ENCODE measurements at regions of chr15 and their contacts with region 1.

Region 1: GRCh38 chr15:41904541-41905005 is 10.7 kb upstream of the SPTBN5 start:
- DNase-seq: peak; percentile 50 to 87
- H3K4me3 ChIP-seq: no peak overlapping the region
- H3K27ac ChIP-seq: no peak overlapping the region
- H3K4me1 ChIP-seq: peaks cover 0 to 4% (median 2%) of the 10 kb centered on the region in 4 experiments; a peak in 1 of 7 replicates
- H3K27me3 ChIP-seq: no peaks in the 10 kb centered on the region; a peak in 1 of 7 replicates
- CTCF ChIP-seq: peak; percentile 84 to 97 (median 96)
- EP300 ChIP-seq: no peak
- POLR2A ChIP-seq: no peak
- RAD21 ChIP-seq: peak; percentile 93 to 96

Region 2: GRCh38 chr15:41811432-41812195 is 93.0 kb before region 1 on chr15:
- CTCF ChIA-PET with region 1: interaction called, 29 read pairs
- POLR2A ChIA-PET with region 1: no interaction called
- DNase-seq: peak; percentile 65 to 91
- H3K4me3 ChIP-seq: no peak overlapping the region
- H3K27ac ChIP-seq: no peak overlapping the region
- H3K4me1 ChIP-seq: peaks cover 0 to 2% (median 0%) of the 10 kb centered on the region in 4 experiments; a peak in 2 of 7 replicates
- H3K27me3 ChIP-seq: no peaks in the 10 kb centered on the region
- CTCF ChIP-seq: peak; percentile 82 to 89 (median 83)
- EP300 ChIP-seq: no peak
- POLR2A ChIP-seq: no peak
- RAD21 ChIP-seq: peak; percentile 91 to 94

Region 3: GRCh38 chr15:41849861-41850260 is 54.7 kb before region 1 on chr15:
- CTCF ChIA-PET with region 1: interaction called, 12 read pairs
- POLR2A ChIA-PET with region 1: interaction called, 3 read pairs
- DNase-seq: no peak
- H3K4me3 ChIP-seq: no peak overlapping the region
- H3K27ac ChIP-seq: no peak overlapping the region
- H3K4me1 ChIP-seq: no peaks in the 10 kb centered on the region; a peak in 2 of 7 replicates
- H3K27me3 ChIP-seq: no peaks in the 10 kb centered on the region
- CTCF ChIP-seq: no peak
- EP300 ChIP-seq: no peak
- POLR2A ChIP-seq: no peak
- RAD21 ChIP-seq: no peak

Region 4: GRCh38 chr15:41866263-41866703 is 38.3 kb before region 1 on chr15:
- CTCF ChIA-PET with region 1: interaction called, 49 read pairs
- POLR2A ChIA-PET with region 1: no interaction called
- DNase-seq: no peak
- H3K4me3 ChIP-seq: no peak overlapping the region
- H3K27ac ChIP-seq: no peak overlapping the region
- H3K4me1 ChIP-seq: peaks cover 0 to 8% (median 2%) of the 10 kb centered on the region in 4 experiments; a peak in 3 of 7 replicates
- H3K27me3 ChIP-seq: no peaks in the 10 kb centered on the region; a peak in 2 of 7 replicates
- CTCF ChIP-seq: no peak
- EP300 ChIP-seq: no peak
- POLR2A ChIP-seq: no peak
- RAD21 ChIP-seq: no peak

Region 5: GRCh38 chr15:41957021-41957897 is 52.7 kb after region 1 on chr15:
- CTCF ChIA-PET with region 1: interaction called, 17 read pairs
- POLR2A ChIA-PET with region 1: no interaction called
- DNase-seq: no peak
- H3K4me3 ChIP-seq: no peak overlapping the region
- H3K27ac ChIP-seq: no peak overlapping the region
- H3K4me1 ChIP-seq: peaks cover 0 to 4% (median 2%) of the 10 kb centered on the region in 4 experiments; a peak in 5 of 7 replicates
- H3K27me3 ChIP-seq: no peaks in the 10 kb centered on the region
- CTCF ChIP-seq: no peak
- EP300 ChIP-seq: no peak
- POLR2A ChIP-seq: no peak
- RAD21 ChIP-seq: no peak

Measured in H1 (cell line).